Dendritic cell treated with granulocyte-macrophage colony-stimulating factor and Interleukin-4, amounts not matched to agents 40 ng/mL and 50 ng/mL, for 4 days (primary cell): ENCODE measurements at regions of chr10 and their contacts with region 1.

Region 1: DNA sequence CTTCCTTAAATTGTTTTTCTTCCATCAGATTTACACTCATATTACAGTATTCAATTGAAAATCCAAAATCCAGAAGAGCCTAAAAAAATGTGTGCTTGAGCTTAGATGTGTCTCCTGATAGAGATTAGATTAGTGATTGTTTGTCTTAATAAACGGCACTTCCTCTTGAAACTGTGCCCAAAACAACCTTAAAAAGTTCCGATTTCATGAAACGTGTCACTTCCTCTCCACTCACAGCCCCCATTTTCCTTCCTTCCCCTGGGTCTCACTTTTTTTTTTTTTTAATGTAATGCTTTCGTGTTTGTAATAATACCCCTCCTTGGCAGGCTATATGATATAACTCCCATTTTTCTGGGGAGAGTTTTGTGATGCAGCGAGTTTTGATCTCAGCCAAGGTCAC is 114.8 kb upstream of the ADO start:
- H3K4me3 Mint-ChIP-seq: peak overlapping the region; percentile 50
- H3K27ac Mint-ChIP-seq: peak overlapping the region; percentile 68
- H3K4me1 Mint-ChIP-seq: peaks cover 67% of the 10 kb centered on the region
- H3K27me3 Mint-ChIP-seq: no peaks in the 10 kb centered on the region

Region 2: GRCh38 chr10:61974601-61975390 is 714.9 kb before region 1 on chr10:
- intact Hi-C with region 1: no loop called
- H3K4me3 Mint-ChIP-seq: no peak overlapping the region
- H3K27ac Mint-ChIP-seq: peak overlapping the region; percentile 22
- H3K4me1 Mint-ChIP-seq: peaks cover 42% of the 10 kb centered on the region
- H3K27me3 Mint-ChIP-seq: no peaks in the 10 kb centered on the region

Region 3: GRCh38 chr10:62399211-62399610 is 290.5 kb before region 1 on chr10:
- intact Hi-C with region 1: no loop called
- H3K4me3 Mint-ChIP-seq: no peak overlapping the region
- H3K27ac Mint-ChIP-seq: no peak overlapping the region
- H3K4me1 Mint-ChIP-seq: no peaks in the 10 kb centered on the region
- H3K27me3 Mint-ChIP-seq: peaks cover 5% of the 10 kb centered on the region

Region 4: DNA sequence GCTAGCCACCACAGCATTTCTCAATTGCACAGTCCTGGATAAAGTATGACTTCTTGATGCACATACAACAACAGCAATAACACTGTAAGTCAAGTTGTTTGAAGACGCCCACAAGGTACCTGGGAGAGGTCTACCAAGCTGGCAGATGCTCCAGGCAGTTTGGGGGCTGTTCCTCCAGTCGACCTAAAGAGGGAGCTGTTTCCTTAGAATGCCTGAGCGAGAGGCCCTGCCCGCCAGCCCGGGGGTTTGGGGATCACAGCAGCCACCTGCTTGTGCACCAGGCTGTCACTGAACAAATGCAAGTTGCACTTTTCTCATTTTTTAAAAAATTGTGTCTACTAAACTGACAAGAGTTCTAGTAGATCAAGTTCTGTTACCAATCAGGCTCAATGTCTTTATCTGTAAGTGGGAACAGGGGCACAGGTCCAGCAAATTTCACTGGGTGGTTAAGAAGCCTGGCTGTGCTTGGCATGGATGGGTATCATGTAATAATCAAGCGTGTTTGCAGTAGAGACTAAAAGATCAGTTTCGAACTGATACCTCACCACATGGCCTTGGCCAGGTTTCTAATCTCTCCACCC is 79.0 kb before region 1 on chr10:
- intact Hi-C with region 1: loop called (anchors 10 kb)
- H3K4me3 Mint-ChIP-seq: no peak overlapping the region
- H3K27ac Mint-ChIP-seq: peak overlapping the region; percentile 1
- H3K4me1 Mint-ChIP-seq: peaks cover 57% of the 10 kb centered on the region
- H3K27me3 Mint-ChIP-seq: no peaks in the 10 kb centered on the region

Region 5: DNA sequence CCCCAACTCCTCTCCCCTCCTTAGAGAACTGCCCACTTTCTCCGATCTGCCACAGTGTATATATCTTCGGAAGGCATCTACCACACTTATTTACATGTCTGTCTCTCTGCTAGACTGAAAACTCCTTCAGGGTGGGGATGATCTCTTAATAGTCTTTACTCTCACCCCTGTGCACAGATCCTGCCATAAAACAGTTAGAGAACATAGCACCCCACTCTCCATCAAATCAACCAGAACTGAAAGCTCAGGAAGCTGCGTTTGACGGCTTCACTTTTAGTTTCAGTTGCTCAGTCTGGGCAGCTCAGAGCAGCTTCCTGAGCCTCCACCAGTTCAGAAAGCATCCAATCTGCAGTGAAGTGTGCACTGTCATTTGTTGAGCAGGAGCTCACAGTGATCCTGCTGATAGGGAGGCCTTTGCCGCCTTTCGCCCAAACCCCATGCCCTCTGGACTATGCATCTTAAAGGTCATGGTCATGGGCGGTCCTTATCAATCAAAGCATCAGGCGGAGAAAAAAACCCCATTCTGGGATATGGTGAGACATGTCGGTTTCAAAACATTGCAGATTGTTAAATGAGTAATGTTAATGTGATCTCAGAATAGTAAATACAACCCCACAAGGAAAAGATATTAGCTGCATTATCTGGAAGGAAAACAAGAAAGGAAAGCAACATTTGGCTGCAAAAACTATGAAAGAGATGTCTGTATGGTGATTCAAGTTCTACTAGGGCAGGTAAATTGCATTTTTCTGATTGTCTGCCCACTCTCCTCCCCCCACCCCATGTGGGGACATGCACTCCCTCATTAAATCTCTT is 52.3 kb before region 1 on chr10:
- intact Hi-C with region 1: loop called (anchors 10 kb)
- H3K4me3 Mint-ChIP-seq: no peak overlapping the region
- H3K27ac Mint-ChIP-seq: no peak overlapping the region
- H3K4me1 Mint-ChIP-seq: peaks cover 19% of the 10 kb centered on the region
- H3K27me3 Mint-ChIP-seq: no peaks in the 10 kb centered on the region

Region 6: DNA sequence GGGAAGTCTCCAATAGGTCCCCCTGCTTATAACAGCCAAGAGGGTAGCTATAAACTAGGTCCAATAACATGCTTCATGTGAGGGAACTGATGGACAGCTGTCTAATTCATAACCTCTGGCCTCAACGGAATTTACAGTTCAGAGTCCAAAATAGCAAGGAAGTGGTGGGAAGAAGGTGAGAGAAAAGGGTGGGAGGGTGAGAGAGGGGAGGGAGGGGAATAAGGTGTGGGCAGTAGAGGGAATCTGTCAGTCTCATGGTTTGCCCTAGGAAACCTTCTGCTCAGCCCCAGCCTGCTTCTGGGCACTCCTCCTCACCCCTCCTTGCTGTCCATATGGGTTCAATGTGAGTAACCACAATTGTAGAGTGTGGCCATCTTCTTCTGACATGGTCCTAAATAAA is 18.6 kb before region 1 on chr10:
- intact Hi-C with region 1: loop called (anchors 2 kb)
- H3K4me3 Mint-ChIP-seq: no peak overlapping the region
- H3K27ac Mint-ChIP-seq: no peak overlapping the region
- H3K4me1 Mint-ChIP-seq: peaks cover 48% of the 10 kb centered on the region
- H3K27me3 Mint-ChIP-seq: no peaks in the 10 kb centered on the region

Region 7: GRCh38 chr10:62742536-62743061 is 52.9 kb after region 1 on chr10:
- intact Hi-C with region 1: loop called (anchors 5 kb)
- H3K4me3 Mint-ChIP-seq: peak overlapping the region; percentile 27
- H3K27ac Mint-ChIP-seq: peak overlapping the region; percentile 95
- H3K4me1 Mint-ChIP-seq: peaks cover 62% of the 10 kb centered on the region
- H3K27me3 Mint-ChIP-seq: no peaks in the 10 kb centered on the region